Activated CD8-positive, alpha-beta T cell treated with anti-CD3 and anti-CD28 coated beads for 36 hours (primary cell): ENCODE measurements at regions of chr5 and their contacts with region 1.

Region 1: GRCh38 chr5:159209438-159210305 is at the start of gene RNF145:
- DNase-seq: peak; percentile 97
- ATAC-seq: peak; percentile 74
- H3K4me3 Mint-ChIP-seq: peak within 1 kb of the TSS; percentile 100
- H3K27ac Mint-ChIP-seq: peak within 1 kb of the TSS; percentile 100
- H3K4me1 Mint-ChIP-seq: peaks cover 37% of the 10 kb centered on the region
- H3K27me3 Mint-ChIP-seq: no peaks in the 10 kb centered on the region
- CTCF ChIP-seq: no peak
- total RNA-seq, gene RNF145: 77.5 to 87.5 TPM

Region 2: GRCh38 chr5:159049844-159050315 is 159.8 kb before region 1 on chr5:
- CTCF ChIA-PET with region 1: no interaction called
- POLR2A ChIA-PET with region 1: no interaction called
- intact Hi-C with region 1: no loop called
- DNase-seq: no peak
- ATAC-seq: no peak
- H3K4me3 Mint-ChIP-seq: no peak overlapping the region
- H3K27ac Mint-ChIP-seq: no peak overlapping the region
- H3K4me1 Mint-ChIP-seq: peaks cover 5% of the 10 kb centered on the region
- H3K27me3 Mint-ChIP-seq: peaks cover 65% of the 10 kb centered on the region
- CTCF ChIP-seq: no peak

Region 3: GRCh38 chr5:159178978-159179377 is 30.7 kb before region 1 on chr5:
- CTCF ChIA-PET with region 1: interaction called, 3 read pairs
- POLR2A ChIA-PET with region 1: interaction called, 7 read pairs
- intact Hi-C with region 1: loop called (anchors 2 kb)
- DNase-seq: peak; percentile 57
- ATAC-seq: peak; percentile 89
- H3K4me3 Mint-ChIP-seq: peak overlapping the region; percentile 26
- H3K27ac Mint-ChIP-seq: peak overlapping the region; percentile 87
- H3K4me1 Mint-ChIP-seq: peaks cover 80% of the 10 kb centered on the region
- H3K27me3 Mint-ChIP-seq: no peaks in the 10 kb centered on the region
- CTCF ChIP-seq: no peak

Region 4: DNA sequence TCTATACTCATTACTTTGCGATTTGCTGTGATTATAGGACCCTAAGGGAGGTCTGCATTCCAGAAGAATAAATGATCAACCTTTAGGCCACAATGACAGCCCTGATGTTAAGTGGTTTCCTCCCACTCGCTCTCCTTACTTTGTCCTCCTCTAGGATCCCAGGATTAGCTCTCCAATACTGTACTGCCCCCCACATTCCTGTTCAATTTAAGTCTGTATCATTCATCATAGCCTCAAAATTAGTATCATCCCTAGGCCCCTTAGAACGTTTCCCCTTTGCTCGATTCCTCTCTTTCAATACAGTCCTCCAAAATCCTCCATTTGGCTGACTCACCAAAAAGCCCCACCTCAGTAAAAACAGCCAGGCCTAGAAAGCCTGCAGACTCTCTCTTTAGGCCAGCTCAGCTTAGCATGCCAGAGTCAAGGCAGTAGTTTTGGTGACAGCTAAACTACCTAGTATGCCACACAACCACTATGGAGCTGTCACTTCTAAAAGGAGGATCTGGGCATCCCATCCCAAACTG is 24.8 kb before region 1 on chr5:
- CTCF ChIA-PET with region 1: interaction called, 3 read pairs
- POLR2A ChIA-PET with region 1: interaction called, 10 read pairs
- intact Hi-C with region 1: no loop called
- DNase-seq: peak; percentile 61
- ATAC-seq: peak; percentile 87
- H3K4me3 Mint-ChIP-seq: no peak overlapping the region
- H3K27ac Mint-ChIP-seq: peak overlapping the region; percentile 84
- H3K4me1 Mint-ChIP-seq: peaks cover 74% of the 10 kb centered on the region
- H3K27me3 Mint-ChIP-seq: no peaks in the 10 kb centered on the region
- CTCF ChIP-seq: no peak

Region 5: DNA sequence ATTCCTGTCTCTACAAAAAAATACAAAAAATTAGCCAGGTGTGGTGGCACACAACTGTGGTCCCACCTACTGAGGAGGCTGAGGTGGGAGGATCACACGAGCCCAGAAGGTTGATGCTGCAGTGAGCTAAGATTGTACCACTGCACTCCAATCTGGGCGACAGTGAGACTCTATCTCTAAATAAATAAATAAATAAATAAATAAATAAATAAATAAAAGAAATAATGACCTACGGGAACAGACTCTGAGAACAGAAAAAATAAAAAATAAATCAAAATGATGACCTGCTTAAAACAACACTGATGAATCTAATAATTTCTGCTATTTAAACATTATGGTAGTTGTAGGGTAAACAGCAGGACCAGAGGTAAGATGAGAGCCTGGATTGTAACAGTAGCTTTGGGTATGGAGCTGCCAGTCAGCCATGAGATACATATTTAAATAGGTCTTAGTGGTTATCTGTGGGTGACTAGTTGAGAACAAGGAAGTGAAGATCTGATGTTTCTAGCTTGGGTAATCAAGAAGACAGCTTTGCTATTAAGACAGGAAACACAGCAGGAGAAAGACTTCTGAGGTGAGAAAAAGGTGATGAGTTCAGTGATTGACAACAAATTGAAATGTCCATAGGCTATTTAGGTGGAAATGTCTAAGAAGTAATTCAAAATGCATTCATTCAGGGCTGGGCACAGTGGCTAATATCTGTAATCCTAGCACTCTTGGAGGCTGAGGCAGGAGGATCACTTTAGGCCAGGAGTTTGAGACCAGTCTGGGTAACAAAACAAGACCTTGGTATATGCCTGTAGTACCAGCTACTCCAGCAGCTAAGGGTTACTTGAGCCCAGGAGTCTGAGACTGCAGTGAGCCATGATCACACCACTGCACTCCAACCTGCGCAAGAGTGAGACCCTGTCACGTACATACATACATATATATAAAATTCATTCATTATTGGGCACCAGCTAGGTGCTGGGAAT is 11.3 kb before region 1 on chr5:
- CTCF ChIA-PET with region 1: interaction called, 8 read pairs
- POLR2A ChIA-PET with region 1: interaction called, 28 read pairs
- intact Hi-C with region 1: no loop called
- DNase-seq: no peak
- ATAC-seq: peak; percentile 87
- H3K4me3 Mint-ChIP-seq: no peak overlapping the region
- H3K27ac Mint-ChIP-seq: peak overlapping the region; percentile 76
- H3K4me1 Mint-ChIP-seq: peaks cover 71% of the 10 kb centered on the region
- H3K27me3 Mint-ChIP-seq: no peaks in the 10 kb centered on the region
- CTCF ChIP-seq: no peak

Region 6: DNA sequence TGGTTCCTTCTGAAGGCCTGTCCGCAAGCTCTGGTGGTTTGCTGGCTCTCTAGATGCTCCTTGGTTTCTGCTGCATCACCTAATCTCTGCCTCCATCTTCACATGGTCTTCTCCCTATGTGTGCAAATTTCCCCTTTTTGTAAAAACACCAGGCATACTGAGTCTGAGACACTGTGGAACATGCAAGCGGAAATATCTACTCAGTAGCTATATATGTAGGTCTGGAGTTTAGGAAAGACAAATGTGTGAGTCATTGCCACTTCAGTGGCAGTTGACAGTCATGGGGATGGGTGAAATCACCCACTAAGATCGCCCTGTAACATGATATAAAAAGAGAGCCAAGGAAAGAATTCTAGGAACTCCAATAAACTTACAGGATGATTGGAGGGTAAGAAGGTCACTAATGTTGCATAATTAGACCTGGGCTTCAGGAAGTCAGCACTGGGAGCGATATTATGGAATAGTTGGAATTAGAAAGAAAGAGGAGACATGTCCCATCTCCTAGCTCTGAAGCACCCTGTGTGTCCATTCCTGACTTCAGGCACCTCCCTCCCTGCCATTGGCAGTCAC is 30.7 kb after region 1 on chr5:
- CTCF ChIA-PET with region 1: no interaction called
- POLR2A ChIA-PET with region 1: no interaction called
- intact Hi-C with region 1: loop called (anchors 5 kb)
- DNase-seq: peak; percentile 20
- ATAC-seq: peak; percentile 84
- H3K4me3 Mint-ChIP-seq: no peak overlapping the region
- H3K27ac Mint-ChIP-seq: peak overlapping the region; percentile 3
- H3K4me1 Mint-ChIP-seq: peaks cover 39% of the 10 kb centered on the region
- H3K27me3 Mint-ChIP-seq: no peaks in the 10 kb centered on the region
- CTCF ChIP-seq: no peak

Region 7: DNA sequence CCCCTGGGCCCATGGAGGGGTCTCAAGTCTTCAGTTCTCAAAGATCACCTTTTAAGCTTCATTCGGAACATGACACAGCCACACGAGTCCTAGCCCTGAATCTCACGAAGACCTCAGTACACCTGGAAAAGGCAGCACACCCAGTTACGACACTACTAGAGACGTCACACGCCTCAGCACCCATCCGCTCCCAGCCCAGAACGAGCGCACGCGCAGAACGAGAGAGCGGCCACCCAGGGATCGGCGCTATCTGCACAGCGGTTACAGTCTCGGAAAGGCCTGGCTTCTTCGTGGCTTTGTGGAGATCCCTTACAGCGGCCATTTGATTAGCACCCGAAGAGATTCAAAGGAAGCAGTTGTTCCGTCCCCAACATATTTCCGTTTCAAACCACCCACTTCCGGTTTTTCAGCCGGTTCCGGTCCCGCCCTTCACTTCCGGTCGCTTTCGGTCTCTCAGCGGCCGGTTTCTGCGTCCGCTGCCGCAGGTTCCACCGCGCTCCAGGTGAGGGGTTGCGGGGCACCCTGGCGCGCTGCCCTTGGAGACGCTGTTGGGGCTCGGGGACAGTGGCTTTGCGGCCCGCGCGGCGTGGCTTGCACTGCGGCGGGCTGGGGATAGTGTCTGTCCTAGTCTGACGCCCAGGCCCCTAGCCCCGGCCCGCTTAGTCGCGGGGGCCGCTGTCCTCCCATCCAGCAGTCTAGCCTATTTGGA is 53.3 kb after region 1 on chr5 and contains the start of gene UBLCP1:
- CTCF ChIA-PET with region 1: interaction called, 5 read pairs
- POLR2A ChIA-PET with region 1: interaction called, 6 read pairs
- intact Hi-C with region 1: loop called (anchors 5 kb)
- DNase-seq: peak; percentile 84
- ATAC-seq: peak; percentile 89
- H3K4me3 Mint-ChIP-seq: peak within 1 kb of the TSS; percentile 92
- H3K27ac Mint-ChIP-seq: peak within 1 kb of the TSS; percentile 99
- H3K4me1 Mint-ChIP-seq: peaks cover 40% of the 10 kb centered on the region
- H3K27me3 Mint-ChIP-seq: no peaks in the 10 kb centered on the region
- CTCF ChIP-seq: no peak
- total RNA-seq, gene UBLCP1: 30.6 to 31.6 TPM